ENCODE measurements at regions of chr9 and their contacts with region 1.

Region 1: DNA sequence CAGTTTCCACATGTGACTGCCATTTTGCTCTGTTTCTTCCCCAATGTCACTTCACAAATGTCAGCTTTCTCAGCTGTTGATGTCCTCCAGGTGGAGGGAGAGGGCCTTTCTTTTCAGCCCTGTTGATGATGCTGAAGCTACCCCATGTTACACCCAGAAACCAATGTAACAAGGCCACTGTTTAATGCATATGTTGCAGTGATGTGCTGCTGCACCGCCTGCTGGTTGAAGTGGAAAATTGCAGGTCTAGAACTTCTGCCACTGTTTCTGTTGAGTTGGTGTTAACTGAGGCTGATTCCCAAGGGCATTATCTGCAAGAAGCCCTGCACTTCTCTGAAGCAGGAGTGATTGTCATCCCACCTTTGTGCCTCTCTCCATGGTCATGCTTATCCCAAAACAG is 428.4 kb downstream of the KDM4C start:
- DNase-seq: no peak
- ATAC-seq: no peak
- H3K4me3 ChIP-seq: no peak overlapping the region
- H3K27ac ChIP-seq: no peak overlapping the region
- H3K4me1 ChIP-seq: no peaks in the 10 kb centered on the region
- H3K27me3 ChIP-seq: no peaks in the 10 kb centered on the region
- CTCF ChIP-seq: peak in 6 of 12 donors; percentile 10 to 30 (median 16)
- POLR2A ChIP-seq: no peak

Region 2: DNA sequence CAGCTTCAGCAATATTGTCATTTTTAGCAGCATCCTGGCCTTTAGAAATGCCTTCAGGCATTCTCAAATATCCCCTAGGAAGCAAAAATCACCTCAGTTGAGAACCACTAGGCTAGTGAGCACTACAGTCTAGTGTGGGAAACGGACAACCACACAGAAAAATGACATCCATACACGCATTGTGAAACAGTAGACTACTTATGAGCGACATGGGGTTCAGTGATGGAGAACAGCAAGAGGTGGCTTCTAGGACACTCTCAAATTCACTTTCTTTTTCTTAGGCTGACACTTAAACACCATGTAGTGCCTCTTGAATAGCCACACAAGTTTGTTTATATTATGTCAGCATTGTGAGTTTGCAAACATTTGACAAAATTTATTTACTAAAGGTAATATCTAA is 225.4 kb before region 1 on chr9:
- intact Hi-C with region 1: no loop called
- DNase-seq: no peak
- ATAC-seq: no peak
- H3K4me3 ChIP-seq: no peak overlapping the region
- H3K27ac ChIP-seq: no peak overlapping the region
- H3K4me1 ChIP-seq: peaks cover 0 to 10% (median under 1%) of the 10 kb centered on the region in 12 donors
- H3K27me3 ChIP-seq: no peaks in the 10 kb centered on the region
- CTCF ChIP-seq: no peak
- POLR2A ChIP-seq: no peak

Region 3: GRCh38 chr9:7058473-7058872 is 127.7 kb before region 1 on chr9:
- intact Hi-C with region 1: no loop called
- DNase-seq: no peak
- ATAC-seq: no peak
- H3K4me3 ChIP-seq: no peak overlapping the region
- H3K27ac ChIP-seq: no peak overlapping the region
- H3K4me1 ChIP-seq: peaks cover 0 to 8% (median 0%) of the 10 kb centered on the region in 12 donors
- H3K27me3 ChIP-seq: no peaks in the 10 kb centered on the region
- CTCF ChIP-seq: no peak
- POLR2A ChIP-seq: no peak

Region 4: DNA sequence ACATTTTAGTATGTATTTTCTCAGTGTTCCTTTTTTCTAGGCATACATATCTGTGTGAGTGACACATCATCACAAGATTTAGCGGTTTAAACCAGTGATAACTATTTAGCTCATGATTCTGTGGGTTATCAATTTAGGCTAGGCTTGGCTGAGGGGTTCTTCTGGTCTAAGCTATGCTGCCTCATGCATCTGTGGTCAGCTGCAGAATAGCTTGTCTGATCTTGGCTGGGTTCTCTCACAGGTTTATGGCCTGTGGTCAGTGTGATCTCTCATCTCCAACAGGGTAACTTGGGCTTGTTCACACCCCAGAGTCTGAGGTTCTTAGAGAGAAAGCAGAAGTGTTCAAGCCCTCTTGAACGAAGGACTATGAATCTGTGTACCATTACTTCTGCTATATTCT is 65.1 kb before region 1 on chr9:
- intact Hi-C with region 1: loop called in 1 of 10 experiments (anchors 10 kb)
- DNase-seq: no peak
- ATAC-seq: peak in 1 of 4 donors; percentile 9
- H3K4me3 ChIP-seq: no peak overlapping the region
- H3K27ac ChIP-seq: no peak overlapping the region
- H3K4me1 ChIP-seq: peaks cover 0 to 9% (median 0%) of the 10 kb centered on the region in 12 donors
- H3K27me3 ChIP-seq: no peaks in the 10 kb centered on the region
- CTCF ChIP-seq: no peak
- POLR2A ChIP-seq: no peak